Activated CD4-positive, alpha-beta T cell treated with anti-CD3 and anti-CD28 coated beads, Interleukin-2, amount 10 ng/mL, durations not matched to agents 24 days and 14 days (primary cell): ENCODE measurements at regions of chr1 and their contacts with region 1.

Region 1: DNA sequence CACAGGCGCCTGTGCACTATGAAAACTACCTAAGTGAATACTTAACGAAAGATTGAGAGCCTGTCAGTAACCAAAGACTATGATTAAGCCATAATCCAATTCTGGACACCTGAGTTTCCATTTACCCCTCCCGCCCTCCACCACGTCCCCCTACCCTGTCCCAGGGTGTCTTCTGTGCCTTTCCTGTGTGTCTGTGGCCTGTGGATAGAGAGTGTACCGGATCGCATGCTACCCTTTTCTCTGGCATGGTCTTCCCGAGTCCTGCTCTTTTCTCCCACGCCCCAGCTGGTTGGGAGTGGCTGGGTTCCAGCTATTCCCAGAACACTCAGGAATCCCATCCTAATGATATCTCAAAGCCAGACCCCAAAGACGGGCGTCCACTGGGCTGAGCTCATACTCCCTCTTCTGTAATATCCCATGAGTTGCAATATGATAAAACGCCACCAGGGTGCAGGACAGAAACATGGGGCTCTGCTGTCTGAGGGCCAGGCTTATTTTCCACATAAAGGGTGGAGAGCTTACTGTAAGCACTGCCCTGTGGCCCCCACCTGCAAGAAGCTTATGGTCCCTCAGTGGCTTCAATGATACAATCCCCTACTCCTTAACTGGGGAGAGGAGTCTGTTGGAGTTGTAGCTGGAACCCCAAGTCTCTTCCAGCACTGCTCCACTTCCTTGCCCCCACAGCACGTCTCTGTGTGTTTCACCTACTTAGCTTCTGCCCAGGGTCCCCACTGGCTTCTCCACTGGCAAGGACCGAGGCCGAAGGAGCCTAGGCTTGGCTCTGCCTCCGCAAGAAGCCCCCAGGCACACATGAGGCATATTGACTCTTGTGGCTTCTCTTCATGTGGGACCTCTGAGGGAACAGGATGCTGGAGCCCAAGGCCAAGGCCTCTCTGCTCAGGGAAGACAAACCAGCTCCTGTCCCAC is 17.6 kb upstream of the ALX3 start:
- DNase-seq: peak; percentile 87
- H3K4me3 Mint-ChIP-seq: no peak overlapping the region
- H3K27ac Mint-ChIP-seq: no peak overlapping the region
- H3K4me1 Mint-ChIP-seq: peaks cover 17% of the 10 kb centered on the region
- H3K27me3 Mint-ChIP-seq: peaks cover 59% of the 10 kb centered on the region

Region 2: DNA sequence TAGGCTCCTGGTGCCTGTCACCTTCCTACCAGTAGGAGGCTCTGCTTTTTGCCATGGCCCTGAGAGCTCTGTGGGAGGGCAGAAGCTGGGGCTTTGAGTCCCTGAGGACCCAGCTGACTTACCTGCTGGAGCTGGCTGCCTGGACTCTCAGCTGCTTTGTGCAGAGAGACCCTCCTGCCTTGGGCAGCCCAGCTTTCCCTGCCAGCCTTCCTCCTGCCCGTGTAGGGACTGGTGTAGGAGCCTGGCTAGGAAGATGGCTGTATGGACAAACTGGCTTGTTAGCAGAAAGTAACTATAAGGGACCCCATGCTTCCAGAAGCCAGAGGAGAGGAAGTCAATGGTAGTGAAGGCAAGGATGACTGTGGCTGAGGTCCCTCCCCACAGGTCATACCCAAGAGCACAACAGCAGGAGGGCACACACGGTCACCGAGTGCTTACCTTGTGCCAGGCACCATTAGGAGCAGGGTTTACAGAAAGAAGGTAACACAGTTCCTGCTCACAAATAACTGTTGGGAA is 848.4 kb before region 1 on chr1:
- intact Hi-C with region 1: no loop called
- DNase-seq: peak; percentile 74
- H3K4me3 Mint-ChIP-seq: no peak overlapping the region
- H3K27ac Mint-ChIP-seq: no peak overlapping the region
- H3K4me1 Mint-ChIP-seq: peaks cover 11% of the 10 kb centered on the region
- H3K27me3 Mint-ChIP-seq: peaks cover 19% of the 10 kb centered on the region

Region 3: DNA sequence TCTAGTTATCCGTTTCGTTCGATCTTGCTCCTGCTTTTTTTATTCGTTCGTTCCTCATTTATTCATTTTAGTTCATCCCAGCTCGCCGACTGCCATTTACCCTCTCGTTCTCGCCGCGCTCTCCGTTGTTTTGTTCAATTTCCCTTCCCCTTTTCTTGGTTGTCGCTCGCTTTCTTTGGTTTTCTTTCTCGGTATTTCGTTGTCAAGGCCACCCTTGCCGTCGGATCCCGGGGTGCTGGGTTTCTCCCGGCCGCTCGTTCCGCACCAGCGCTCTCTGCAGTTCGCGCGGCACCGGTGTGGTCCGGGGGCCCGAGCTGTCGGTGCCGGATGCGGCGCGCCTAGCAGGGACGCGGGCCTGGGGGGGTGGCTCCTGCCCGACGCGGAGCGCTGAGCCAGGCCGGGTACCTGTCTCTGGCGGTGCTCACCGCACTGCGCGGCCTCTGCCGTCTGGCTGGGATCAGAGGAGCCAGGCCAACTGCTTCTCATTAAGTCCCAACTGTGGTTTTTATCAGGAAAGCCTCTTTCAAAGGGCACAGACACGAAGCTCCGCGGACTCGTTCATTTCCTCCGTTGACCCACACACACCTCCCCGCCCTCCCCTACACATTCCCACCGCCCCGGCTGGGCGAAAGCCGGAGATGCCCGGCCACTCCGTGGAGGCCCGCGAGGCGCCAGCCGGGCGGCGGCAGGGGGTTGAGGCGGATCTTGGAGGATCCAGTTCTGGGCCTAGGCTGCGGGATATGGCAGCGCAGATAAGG is 19.2 kb before region 1 on chr1:
- intact Hi-C with region 1: loop called (anchors 2 kb)
- DNase-seq: peak; percentile 77
- H3K4me3 Mint-ChIP-seq: peak overlapping the region; percentile 62
- H3K27ac Mint-ChIP-seq: peak overlapping the region; percentile 64
- H3K4me1 Mint-ChIP-seq: peaks cover 8% of the 10 kb centered on the region
- H3K27me3 Mint-ChIP-seq: peaks cover 64% of the 10 kb centered on the region

Region 4: DNA sequence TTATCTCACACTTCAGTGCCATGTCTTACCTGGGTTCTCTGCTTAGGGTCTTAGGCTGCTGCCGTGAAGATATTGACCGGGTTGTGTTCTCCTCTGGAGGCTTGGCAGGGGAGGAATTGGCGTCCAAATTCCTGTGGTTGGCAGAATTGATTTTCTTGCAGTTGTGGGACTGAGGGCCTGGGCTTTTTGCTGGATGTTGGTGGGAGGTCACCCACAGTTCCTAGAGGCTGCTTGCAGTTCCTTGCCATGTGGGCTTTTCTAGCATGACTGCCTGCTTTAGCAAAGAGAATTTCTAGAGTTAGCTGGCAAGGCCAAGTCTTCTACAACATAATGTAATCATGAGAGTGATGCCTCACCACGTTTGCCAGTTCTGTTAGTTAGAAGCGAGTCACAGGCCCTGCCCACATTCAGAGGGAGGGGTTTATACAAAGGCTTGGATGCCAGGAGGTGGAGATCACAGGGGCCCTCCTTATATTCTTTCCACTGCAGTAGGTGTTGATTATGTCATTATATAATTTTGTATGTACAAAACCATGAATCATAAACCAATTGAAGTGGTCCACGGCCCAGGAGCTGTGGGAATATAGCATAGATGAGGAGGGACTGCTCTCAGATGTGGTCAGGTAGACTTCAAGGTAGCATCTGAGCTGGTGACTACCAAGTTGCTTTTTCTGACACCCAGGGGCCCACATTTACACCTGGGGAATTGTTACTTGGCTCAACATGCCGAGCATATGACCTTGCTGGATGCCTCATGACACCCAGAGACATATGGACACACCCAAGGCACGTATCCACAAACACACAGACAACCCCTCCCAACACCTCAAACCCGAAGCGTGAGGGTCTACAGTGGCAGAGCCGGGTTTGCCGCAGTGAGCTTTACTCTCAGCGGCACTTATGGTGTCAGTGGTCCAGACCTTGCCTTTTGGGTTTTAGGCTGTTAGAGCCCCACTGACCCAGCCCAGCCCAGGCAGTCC is 30.9 kb after region 1 on chr1:
- intact Hi-C with region 1: loop called (anchors 5 kb)
- DNase-seq: no peak
- H3K4me3 Mint-ChIP-seq: no peak overlapping the region
- H3K27ac Mint-ChIP-seq: no peak overlapping the region
- H3K4me1 Mint-ChIP-seq: peaks cover 2% of the 10 kb centered on the region
- H3K27me3 Mint-ChIP-seq: peaks cover 14% of the 10 kb centered on the region